Activated CD4-positive, alpha-beta memory T cell treated with anti-CD3 and anti-CD28 coated beads for 36 hours (primary cell): ENCODE measurements at regions of chr1 and their contacts with region 1.

Region 1: DNA sequence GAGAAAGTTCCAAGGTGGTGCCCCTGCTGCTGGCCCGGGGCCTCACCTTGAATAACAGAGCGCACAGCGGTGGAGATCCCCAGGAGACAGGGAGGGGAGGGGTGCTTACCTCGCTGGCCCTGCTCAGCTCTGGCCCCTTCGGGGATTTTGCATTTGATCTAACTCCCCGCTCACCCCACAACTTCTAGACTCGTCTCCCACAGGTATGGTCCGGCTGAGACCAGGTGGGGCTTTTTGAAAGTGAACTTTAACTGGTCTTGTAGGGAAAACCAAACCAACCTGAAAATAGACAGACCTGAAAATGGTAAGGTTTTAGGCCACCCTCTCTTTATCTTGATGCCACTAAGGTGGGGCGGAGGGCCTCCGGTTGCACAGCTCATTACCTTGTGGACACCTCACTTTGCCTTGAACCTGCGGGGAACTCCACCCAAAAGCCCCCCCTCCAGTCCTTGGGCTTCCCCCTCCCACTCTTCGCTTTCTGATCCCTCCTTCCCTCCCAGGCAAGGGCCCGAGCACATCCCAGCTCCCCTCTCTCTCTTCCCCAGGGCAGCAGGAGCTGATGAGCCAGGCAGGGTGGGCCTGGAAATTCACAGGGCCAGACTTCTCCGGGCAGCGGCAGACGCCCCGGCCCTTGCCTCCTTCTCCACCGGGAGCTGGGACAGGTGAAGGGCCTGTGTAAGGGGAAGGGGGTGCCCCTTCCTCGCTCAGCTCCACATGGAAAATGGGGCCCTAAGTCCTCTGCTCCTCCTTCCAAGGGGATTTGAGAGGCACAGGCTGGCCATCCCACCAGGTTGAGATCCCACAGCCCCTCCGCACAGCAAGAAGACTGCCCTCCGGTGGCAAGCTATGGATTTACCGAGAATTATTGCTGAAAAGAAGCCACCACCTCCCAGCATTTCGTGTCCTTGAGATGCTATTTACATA is 16.1 kb downstream of the TNFRSF8 start:
- DNase-seq: peak; percentile 74
- H3K4me3 Mint-ChIP-seq: peak overlapping the region; percentile 44
- H3K27ac Mint-ChIP-seq: peak overlapping the region; percentile 70
- H3K4me1 Mint-ChIP-seq: peaks cover 33% of the 10 kb centered on the region
- H3K27me3 Mint-ChIP-seq: peaks cover 5% of the 10 kb centered on the region

Region 2: DNA sequence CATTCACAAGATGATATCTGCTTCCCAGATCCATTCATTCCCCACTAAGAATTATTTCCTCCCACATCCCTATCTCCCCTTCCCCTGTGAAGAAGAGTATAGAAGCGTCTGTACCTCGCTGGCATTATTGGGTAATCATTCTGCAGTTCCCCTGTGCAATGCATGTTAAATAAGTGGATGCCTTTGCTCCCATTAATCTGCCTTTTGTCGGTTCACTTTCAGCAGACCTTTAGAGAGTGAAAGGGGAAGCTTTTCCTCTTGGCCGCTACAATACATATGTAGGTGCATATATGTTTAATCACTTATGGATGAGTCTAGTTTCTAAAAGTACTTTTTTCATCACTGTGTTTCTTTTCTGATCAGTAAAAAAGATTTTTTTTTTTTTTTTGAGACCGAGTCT is 266.2 kb before region 1 on chr1:
- CTCF ChIA-PET with region 1: no interaction called
- POLR2A ChIA-PET with region 1: no interaction called
- intact Hi-C with region 1: no loop called
- DNase-seq: no peak
- H3K4me3 Mint-ChIP-seq: no peak overlapping the region
- H3K27ac Mint-ChIP-seq: no peak overlapping the region
- H3K4me1 Mint-ChIP-seq: peaks cover 6% of the 10 kb centered on the region
- H3K27me3 Mint-ChIP-seq: no peaks in the 10 kb centered on the region

Region 3: DNA sequence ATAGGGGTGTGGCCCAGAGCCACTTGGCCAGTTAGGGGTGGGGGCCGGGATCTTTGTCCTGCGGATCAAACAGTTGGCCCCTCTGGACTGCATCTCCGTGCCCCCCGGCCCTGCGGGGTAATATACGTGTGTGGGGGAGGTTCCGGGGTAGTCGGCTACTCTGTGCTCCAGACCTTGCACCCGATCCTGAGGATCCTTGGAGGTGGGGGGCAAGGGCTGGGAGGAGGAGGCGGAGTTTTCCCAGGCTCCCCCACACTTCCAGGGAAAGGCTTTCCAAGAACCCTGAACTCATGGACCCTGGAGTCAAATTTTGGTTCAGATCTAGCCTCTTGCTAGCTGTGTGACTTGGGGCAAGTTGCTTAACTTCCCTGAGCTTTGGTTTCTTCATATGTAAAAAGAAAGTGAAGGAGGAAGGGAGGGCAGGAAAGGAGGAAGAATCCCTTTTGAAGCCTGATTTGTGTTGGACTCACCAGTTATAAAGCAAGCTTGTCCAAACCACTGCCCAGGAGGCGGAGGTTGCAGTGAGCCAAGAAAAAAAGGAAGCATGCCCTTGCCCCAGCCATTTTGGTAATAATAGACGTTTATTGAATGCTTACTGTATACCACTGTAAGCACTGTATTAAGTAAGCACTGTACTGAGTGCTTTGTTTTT is 59.2 kb before region 1 on chr1:
- CTCF ChIA-PET with region 1: interaction called, 20 read pairs
- POLR2A ChIA-PET with region 1: interaction called, 16 read pairs
- intact Hi-C with region 1: no loop called
- DNase-seq: peak; percentile 14
- H3K4me3 Mint-ChIP-seq: peak overlapping the region; percentile 80
- H3K27ac Mint-ChIP-seq: peak overlapping the region; percentile 72
- H3K4me1 Mint-ChIP-seq: peaks cover 9% of the 10 kb centered on the region
- H3K27me3 Mint-ChIP-seq: no peaks in the 10 kb centered on the region

Region 4: GRCh38 chr1:12040457-12041051 is 38.6 kb before region 1 on chr1:
- CTCF ChIA-PET with region 1: interaction called, 25 read pairs
- POLR2A ChIA-PET with region 1: interaction called, 5 read pairs
- intact Hi-C with region 1: no loop called
- DNase-seq: peak; percentile 66
- H3K4me3 Mint-ChIP-seq: no peak overlapping the region
- H3K27ac Mint-ChIP-seq: peak overlapping the region; percentile 46
- H3K4me1 Mint-ChIP-seq: peaks cover 43% of the 10 kb centered on the region
- H3K27me3 Mint-ChIP-seq: peaks cover 3% of the 10 kb centered on the region

Region 5: DNA sequence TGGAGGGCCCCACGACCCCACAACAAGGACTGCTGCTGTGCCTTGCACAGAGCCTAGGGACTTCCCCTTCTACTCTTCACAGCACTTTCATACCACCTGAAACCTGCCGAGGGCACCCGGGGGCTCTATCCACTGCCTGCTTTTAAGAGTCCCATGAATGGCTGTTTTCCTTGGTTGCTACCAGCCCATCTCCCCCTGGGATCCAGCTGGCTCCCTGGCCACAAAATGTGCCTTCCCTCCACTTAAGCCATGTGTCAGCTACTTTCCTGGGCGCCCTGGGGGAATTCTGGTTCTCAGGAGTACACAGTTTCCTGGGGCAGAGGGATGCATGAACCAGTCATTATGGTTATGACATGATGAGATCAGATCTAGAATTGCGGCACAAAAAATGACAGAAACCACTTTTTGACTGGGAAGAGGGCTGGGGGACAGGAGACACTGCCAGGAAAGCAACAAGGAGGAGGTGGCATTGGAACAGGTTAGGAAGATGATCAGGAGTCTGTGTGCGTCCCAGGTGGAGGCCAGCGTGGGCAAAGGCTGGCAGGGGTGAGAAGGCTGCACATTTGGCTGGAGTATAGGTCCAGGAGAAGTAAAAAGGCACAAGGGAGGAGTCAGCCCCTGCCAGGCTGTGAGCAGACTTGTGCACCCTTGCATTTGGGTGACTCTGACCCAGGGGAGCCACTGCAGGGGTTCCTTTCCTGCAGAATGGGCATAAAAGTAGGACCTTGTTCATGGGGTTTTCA is 19.3 kb before region 1 on chr1:
- CTCF ChIA-PET with region 1: interaction called, 17 read pairs
- POLR2A ChIA-PET with region 1: interaction called, 5 read pairs
- intact Hi-C with region 1: no loop called
- DNase-seq: peak; percentile 76
- H3K4me3 Mint-ChIP-seq: peak overlapping the region; percentile 24
- H3K27ac Mint-ChIP-seq: peak overlapping the region; percentile 78
- H3K4me1 Mint-ChIP-seq: peaks cover 79% of the 10 kb centered on the region
- H3K27me3 Mint-ChIP-seq: peaks cover 19% of the 10 kb centered on the region

Region 6: GRCh38 chr1:12095452-12096263 is 16.5 kb after region 1 on chr1:
- CTCF ChIA-PET with region 1: no interaction called
- POLR2A ChIA-PET with region 1: no interaction called
- intact Hi-C with region 1: no loop called
- DNase-seq: no peak
- H3K4me3 Mint-ChIP-seq: no peak overlapping the region
- H3K27ac Mint-ChIP-seq: no peak overlapping the region
- H3K4me1 Mint-ChIP-seq: peaks cover 9% of the 10 kb centered on the region
- H3K27me3 Mint-ChIP-seq: no peaks in the 10 kb centered on the region